ENCODE measurements at regions of chr16 and their contacts with region 1.

Region 1: DNA sequence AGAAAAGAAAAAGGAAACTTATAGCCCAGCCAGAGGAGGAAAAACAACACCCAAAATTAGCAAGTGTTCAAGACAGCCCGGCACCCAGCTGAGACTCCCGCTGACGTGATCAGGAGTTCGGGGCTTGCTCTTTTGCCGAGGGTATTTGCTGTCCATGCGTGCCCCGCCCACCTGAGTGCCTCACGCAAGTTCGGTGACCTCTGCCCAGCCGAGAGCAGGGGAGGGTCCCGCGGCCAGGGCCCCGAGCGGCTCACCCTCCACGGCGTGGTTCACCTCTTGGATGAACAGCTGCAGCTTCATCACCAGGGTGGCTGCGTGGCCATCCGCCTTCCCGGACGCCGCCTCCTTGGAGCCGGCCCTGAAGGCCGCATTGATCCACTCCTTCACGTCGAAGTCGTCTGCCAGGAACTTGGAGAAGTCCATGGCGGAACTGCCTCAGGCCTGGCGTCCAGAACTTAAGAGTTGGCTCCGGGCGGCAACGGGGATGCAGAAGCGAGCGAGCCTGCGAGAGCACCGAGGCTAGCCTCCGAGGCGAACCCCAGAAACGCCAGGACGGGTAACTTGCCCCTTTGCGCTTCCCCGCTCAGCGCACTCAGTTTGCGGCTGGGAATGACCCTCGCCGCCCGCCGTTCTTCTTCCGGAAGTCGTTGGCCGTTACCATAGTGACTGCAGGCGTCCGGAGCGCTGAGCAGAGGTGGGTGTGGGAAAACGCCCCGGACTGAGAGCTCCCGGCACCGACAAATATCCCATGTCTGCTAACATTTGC is at the start of gene COG7:
- DNase-seq: peak; percentile 62 to 91 (median 83)
- ATAC-seq: peak; percentile 89
- H3K4me3 ChIP-seq: peak within 1 kb of the TSS; percentile 96 to 100
- H3K4me3 Mint-ChIP-seq: peak within 1 kb of the TSS; percentile 95
- H3K27ac ChIP-seq: peak within 1 kb of the TSS; percentile 43 to 66
- H3K27ac Mint-ChIP-seq: peak within 1 kb of the TSS; percentile 89
- H3K4me1 ChIP-seq: peaks cover 17% of the 10 kb centered on the region
- H3K4me1 Mint-ChIP-seq: peaks cover 33% of the 10 kb centered on the region
- H3K27me3 ChIP-seq: no peaks in the 10 kb centered on the region
- H3K27me3 Mint-ChIP-seq: no peaks in the 10 kb centered on the region
- CTCF ChIP-seq: no peak
- total RNA-seq, gene COG7: 13.3 to 14.7 TPM

Region 2: GRCh38 chr16:23435500-23435899 is 17.3 kb before region 1 on chr16:
- CTCF ChIA-PET with region 1: interaction called, 21 read pairs
- POLR2A ChIA-PET with region 1: no interaction called
- intact Hi-C with region 1: no loop called
- DNase-seq: peak; percentile 29 to 77 (median 67)
- ATAC-seq: peak; percentile 97
- H3K4me3 ChIP-seq: no peak overlapping the region
- H3K4me3 Mint-ChIP-seq: no peak overlapping the region
- H3K27ac ChIP-seq: no peak overlapping the region
- H3K27ac Mint-ChIP-seq: no peak overlapping the region
- H3K4me1 ChIP-seq: no peaks in the 10 kb centered on the region
- H3K4me1 Mint-ChIP-seq: peaks cover 6% of the 10 kb centered on the region
- H3K27me3 ChIP-seq: no peaks in the 10 kb centered on the region
- H3K27me3 Mint-ChIP-seq: no peaks in the 10 kb centered on the region
- CTCF ChIP-seq: peak; percentile 67

Region 3: DNA sequence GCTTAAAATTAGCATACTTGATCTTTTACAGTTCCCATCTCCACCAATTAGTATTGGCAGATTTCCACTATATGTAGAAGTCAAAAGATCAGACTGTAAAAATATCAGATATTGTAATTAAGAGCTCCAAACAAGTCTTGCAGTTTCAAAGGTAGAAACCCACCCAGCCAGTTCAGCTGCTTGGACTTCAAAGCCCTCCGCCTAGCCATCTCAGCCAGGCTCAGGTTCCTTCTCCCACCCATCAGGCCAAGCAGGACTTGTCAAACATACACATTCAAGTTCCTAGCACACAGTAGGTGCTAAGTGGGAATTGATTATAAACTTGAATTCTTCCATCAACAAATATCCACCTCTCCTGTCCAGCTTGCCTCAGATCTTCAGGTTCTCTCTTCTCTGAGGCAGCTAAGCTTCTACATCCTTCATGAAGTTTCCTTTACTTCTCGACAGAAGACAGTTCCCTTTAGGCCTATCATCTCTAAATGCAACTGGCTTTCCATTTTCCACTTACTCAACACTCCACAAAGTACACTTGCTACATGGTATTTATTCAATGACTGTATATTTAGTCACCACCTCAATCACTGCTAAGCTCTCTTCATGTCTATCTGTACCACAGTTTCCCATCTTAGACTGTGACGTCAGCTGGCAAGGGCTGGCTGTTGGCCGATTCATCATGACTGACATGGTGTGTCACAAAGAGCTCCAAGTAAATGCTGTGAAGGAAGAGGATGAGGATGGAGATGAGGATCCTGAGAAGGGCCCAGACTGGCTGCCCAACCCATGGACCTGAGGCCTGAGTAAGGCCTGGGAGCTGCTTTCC is 13.5 kb after region 1 on chr16:
- CTCF ChIA-PET with region 1: no interaction called
- POLR2A ChIA-PET with region 1: no interaction called
- intact Hi-C with region 1: no loop called
- DNase-seq: no peak
- ATAC-seq: no peak
- H3K4me3 ChIP-seq: no peak overlapping the region
- H3K4me3 Mint-ChIP-seq: no peak overlapping the region
- H3K27ac ChIP-seq: no peak overlapping the region
- H3K27ac Mint-ChIP-seq: peak overlapping the region; percentile 2
- H3K4me1 ChIP-seq: no peaks in the 10 kb centered on the region
- H3K4me1 Mint-ChIP-seq: no peaks in the 10 kb centered on the region
- H3K27me3 ChIP-seq: no peaks in the 10 kb centered on the region
- H3K27me3 Mint-ChIP-seq: no peaks in the 10 kb centered on the region
- CTCF ChIP-seq: no peak

Region 4: GRCh38 chr16:23510164-23510914 is 57.6 kb after region 1 on chr16 and contains the start of gene GGA2:
- CTCF ChIA-PET with region 1: no interaction called
- POLR2A ChIA-PET with region 1: no interaction called
- intact Hi-C with region 1: loop called (anchors 2 to 10 kb)
- DNase-seq: peak; percentile 56 to 89 (median 77)
- ATAC-seq: peak; percentile 81
- H3K4me3 ChIP-seq: peak within 1 kb of the TSS; percentile 63 to 73
- H3K4me3 Mint-ChIP-seq: peak within 1 kb of the TSS; percentile 92
- H3K27ac ChIP-seq: peak within 1 kb of the TSS; percentile 40 to 64
- H3K27ac Mint-ChIP-seq: peak within 1 kb of the TSS; percentile 88
- H3K4me1 ChIP-seq: peaks cover 42% of the 10 kb centered on the region
- H3K4me1 Mint-ChIP-seq: peaks cover 59% of the 10 kb centered on the region
- H3K27me3 ChIP-seq: no peaks in the 10 kb centered on the region
- H3K27me3 Mint-ChIP-seq: no peaks in the 10 kb centered on the region
- CTCF ChIP-seq: no peak
- total RNA-seq, gene GGA2: 220 to 239 TPM

Region 5: GRCh38 chr16:23835390-23836077 is 382.8 kb after region 1 on chr16 and contains the start of gene PRKCB:
- CTCF ChIA-PET with region 1: no interaction called
- POLR2A ChIA-PET with region 1: no interaction called
- intact Hi-C with region 1: loop called in 1 of 2 experiments (anchors 10 kb)
- DNase-seq: peak; percentile 80 to 94 (median 88)
- ATAC-seq: peak; percentile 88
- H3K4me3 ChIP-seq: peak within 1 kb of the TSS; percentile 71 to 93
- H3K4me3 Mint-ChIP-seq: peak within 1 kb of the TSS; percentile 99
- H3K27ac ChIP-seq: peak within 1 kb of the TSS; percentile 40 to 44
- H3K27ac Mint-ChIP-seq: peak within 1 kb of the TSS; percentile 95
- H3K4me1 ChIP-seq: peaks cover 48% of the 10 kb centered on the region
- H3K4me1 Mint-ChIP-seq: peaks cover 55% of the 10 kb centered on the region
- H3K27me3 ChIP-seq: no peaks in the 10 kb centered on the region
- H3K27me3 Mint-ChIP-seq: no peaks in the 10 kb centered on the region
- CTCF ChIP-seq: no peak
- total RNA-seq, gene PRKCB: 62.8 to 64.4 TPM

Region 6: GRCh38 chr16:23863511-23864422 is 411.0 kb after region 1 on chr16:
- CTCF ChIA-PET with region 1: no interaction called
- POLR2A ChIA-PET with region 1: no interaction called
- intact Hi-C with region 1: no loop called
- DNase-seq: peak in 2 of 9 experiments; percentile 38 to 67
- ATAC-seq: peak; percentile 86
- H3K4me3 ChIP-seq: peak overlapping the region; percentile 46 to 56
- H3K4me3 Mint-ChIP-seq: peak overlapping the region; percentile 88
- H3K27ac ChIP-seq: peak overlapping the region; percentile 30 to 70
- H3K27ac Mint-ChIP-seq: peak overlapping the region; percentile 91
- H3K4me1 ChIP-seq: peaks cover 68% of the 10 kb centered on the region
- H3K4me1 Mint-ChIP-seq: peaks cover 86% of the 10 kb centered on the region
- H3K27me3 ChIP-seq: no peaks in the 10 kb centered on the region
- H3K27me3 Mint-ChIP-seq: no peaks in the 10 kb centered on the region
- CTCF ChIP-seq: no peak